IMR-90 (cell line): ENCODE measurements at regions of chr5 and their contacts with region 1.

Region 1: GRCh38 chr5:172707285-172708182 is 63.5 kb downstream of the DUSP1 start:
- DNase-seq: peak; percentile 76
- ATAC-seq: peak; percentile 96
- H3K4me3 ChIP-seq: no peak overlapping the region
- H3K27ac ChIP-seq: no peak overlapping the region
- H3K4me1 ChIP-seq: peaks cover 4% of the 10 kb centered on the region
- H3K27me3 ChIP-seq: peaks cover 10% of the 10 kb centered on the region
- CTCF ChIP-seq: peak; percentile 72
- POLR2A ChIP-seq: no peak
- RAD21 ChIP-seq: peak; percentile 89

Region 2: GRCh38 chr5:172954751-172955159 is 247.2 kb after region 1 on chr5:
- CTCF ChIA-PET with region 1: no interaction called
- POLR2A ChIA-PET with region 1: interaction called, 31 read pairs
- dilution Hi-C with region 1: no loop called
- in situ Hi-C with region 1: no loop called
- intact Hi-C with region 1: no loop called
- DNase-seq: no peak
- ATAC-seq: no peak
- H3K4me3 ChIP-seq: no peak overlapping the region
- H3K27ac ChIP-seq: peak overlapping the region; percentile 87
- H3K4me1 ChIP-seq: peaks cover 22% of the 10 kb centered on the region
- H3K27me3 ChIP-seq: no peaks in the 10 kb centered on the region
- CTCF ChIP-seq: no peak
- POLR2A ChIP-seq: no peak
- RAD21 ChIP-seq: no peak

Region 3: GRCh38 chr5:173144200-173145176 is 437.0 kb after region 1 on chr5 and contains the start of gene BNIP1:
- CTCF ChIA-PET with region 1: no interaction called
- POLR2A ChIA-PET with region 1: no interaction called
- dilution Hi-C with region 1: no loop called
- in situ Hi-C with region 1: loop called (anchors 10 kb)
- intact Hi-C with region 1: loop called (anchors 5 kb)
- DNase-seq: peak; percentile 94
- ATAC-seq: peak; percentile 96
- H3K4me3 ChIP-seq: peak within 1 kb of the TSS; percentile 53
- H3K27ac ChIP-seq: peak within 1 kb of the TSS; percentile 67
- H3K4me1 ChIP-seq: no peaks in the 10 kb centered on the region
- H3K27me3 ChIP-seq: no peaks in the 10 kb centered on the region
- CTCF ChIP-seq: peak; percentile 99
- POLR2A ChIP-seq: peak; percentile 69
- RAD21 ChIP-seq: peak; percentile 66
- total RNA-seq, gene BNIP1: 29.2 and 35.3 TPM in 2 replicates

Region 4: DNA sequence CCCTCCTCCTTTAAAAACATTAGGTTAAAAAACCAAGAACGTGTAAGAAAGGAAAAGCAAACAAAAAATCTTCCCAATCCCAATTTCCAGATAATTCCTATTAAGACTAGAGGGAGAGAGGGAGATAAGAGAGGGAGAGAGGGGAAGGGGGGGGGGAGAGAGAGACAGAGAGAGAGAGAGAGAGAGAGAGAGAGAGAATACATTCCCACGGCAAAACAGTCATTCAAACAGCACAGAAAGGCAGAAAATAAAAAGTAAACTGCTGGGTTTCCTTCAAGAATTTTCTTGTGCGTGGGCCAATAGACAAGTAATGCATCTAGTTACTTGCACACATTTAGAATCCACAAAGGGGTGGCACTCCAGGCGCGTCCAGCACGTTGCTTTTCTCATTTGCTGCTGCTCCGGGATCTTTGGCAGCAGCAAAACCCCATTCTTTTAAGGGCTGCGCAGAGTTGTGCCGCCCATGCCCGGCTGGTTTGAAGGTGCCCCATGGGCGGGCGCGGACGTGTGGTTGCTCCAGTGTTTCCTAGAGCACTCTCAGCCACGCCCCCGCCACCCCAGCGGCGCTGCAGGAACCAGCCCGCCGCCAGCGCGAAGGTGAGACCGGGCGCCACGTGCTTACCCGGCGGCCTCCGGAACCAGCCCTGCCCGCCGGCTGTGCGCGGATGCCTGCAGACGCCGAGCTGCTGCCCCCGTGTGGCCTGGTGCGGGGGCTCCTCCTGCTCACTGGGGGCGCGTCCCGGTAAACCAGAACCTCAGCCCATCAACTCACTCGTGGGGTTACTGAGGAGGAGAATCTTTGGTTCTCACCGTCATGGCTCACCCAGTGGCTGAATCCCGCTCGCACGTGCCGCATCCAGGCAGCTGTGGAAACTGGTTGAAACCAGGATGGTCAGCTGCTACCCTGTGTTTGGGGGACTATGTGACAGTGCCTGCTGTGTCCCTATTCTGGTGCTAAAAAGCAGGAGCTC is 576.1 kb after region 1 on chr5:
- CTCF ChIA-PET with region 1: interaction called, 3 read pairs
- POLR2A ChIA-PET with region 1: interaction called, 4 read pairs
- dilution Hi-C with region 1: no loop called
- in situ Hi-C with region 1: no loop called
- intact Hi-C with region 1: loop called (anchors 1 kb)
- DNase-seq: peak; percentile 49
- ATAC-seq: peak; percentile 98
- H3K4me3 ChIP-seq: peak overlapping the region; percentile 14; the same call in 1 of the 2 replicates
- H3K27ac ChIP-seq: no peak overlapping the region
- H3K4me1 ChIP-seq: no peaks in the 10 kb centered on the region
- H3K27me3 ChIP-seq: peaks cover 39% of the 10 kb centered on the region
- CTCF ChIP-seq: peak; percentile 68
- POLR2A ChIP-seq: no peak
- RAD21 ChIP-seq: peak; percentile 74

Region 5: DNA sequence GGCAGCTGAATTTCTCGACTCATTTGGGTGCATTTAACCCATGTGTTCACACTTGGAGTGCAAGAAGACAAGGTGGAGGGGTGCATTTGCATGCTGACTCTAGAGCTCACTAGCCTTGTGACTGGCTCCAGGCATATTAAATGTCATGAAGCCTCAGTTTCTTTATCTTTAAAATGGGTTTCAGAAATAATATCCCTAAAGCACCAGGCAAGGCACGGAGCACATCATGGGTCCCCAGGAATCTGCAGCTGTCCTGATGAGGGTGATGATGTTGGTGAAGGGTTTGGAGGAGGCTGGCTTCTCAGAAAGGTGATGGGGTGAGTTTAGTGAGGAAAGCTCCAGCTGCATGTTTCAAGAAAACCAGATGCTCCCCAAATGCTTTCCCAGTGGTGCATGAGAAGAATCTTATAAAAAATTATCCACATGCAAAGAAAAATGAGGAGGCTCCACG is 605.8 kb after region 1 on chr5:
- CTCF ChIA-PET with region 1: no interaction called
- POLR2A ChIA-PET with region 1: no interaction called
- dilution Hi-C with region 1: no loop called
- in situ Hi-C with region 1: no loop called
- intact Hi-C with region 1: loop called (anchors 1 kb)
- DNase-seq: peak; percentile 14
- ATAC-seq: no peak
- H3K4me3 ChIP-seq: no peak overlapping the region
- H3K27ac ChIP-seq: no peak overlapping the region
- H3K4me1 ChIP-seq: peaks cover 31% of the 10 kb centered on the region
- H3K27me3 ChIP-seq: no peaks in the 10 kb centered on the region
- CTCF ChIP-seq: no peak
- POLR2A ChIP-seq: no peak
- RAD21 ChIP-seq: no peak